K562 (cell line): ENCODE measurements at regions of chr2 and their contacts with region 1.

Region 1: DNA sequence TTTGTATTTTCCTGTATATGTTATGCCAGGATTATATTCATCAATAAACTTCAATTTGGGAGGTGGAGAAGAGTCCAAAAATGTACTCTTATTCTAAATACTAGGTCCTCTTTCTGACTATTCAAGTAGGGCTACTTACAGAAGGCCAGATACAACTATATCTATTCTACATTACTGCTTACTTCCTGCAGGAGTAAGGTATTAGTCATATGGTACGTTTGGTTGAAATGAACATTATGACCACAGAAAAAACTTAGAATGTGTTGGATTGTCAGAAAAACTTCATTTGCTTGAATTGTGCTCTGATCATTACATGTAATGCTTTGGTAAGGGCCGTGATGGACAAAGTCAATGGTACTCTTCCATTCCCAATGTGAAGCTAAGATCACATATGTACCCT is 35.0 kb downstream of the STAT4 start:
- DNase-seq: no peak
- ATAC-seq: no peak
- H3K4me3 ChIP-seq: no peak overlapping the region
- H3K27ac ChIP-seq: no peak overlapping the region
- H3K4me1 ChIP-seq: no peaks in the 10 kb centered on the region
- H3K27me3 ChIP-seq: 0 out of 5 replicates have a peak, but pooled peaks cover 0 to 4% of the 10 kb centered on the region in 2 experiments
- CTCF ChIP-seq: no peak
- EP300 ChIP-seq: no peak
- POLR2A ChIP-seq: no peak
- RAD21 ChIP-seq: no peak

Region 2: GRCh38 chr2:191145769-191146471 is 30.1 kb after region 1 on chr2:
- CTCF ChIA-PET with region 1: no interaction called
- POLR2A ChIA-PET with region 1: no interaction called
- in situ Hi-C with region 1: no loop called
- intact Hi-C with region 1: loop called (anchors 1 kb)
- DNase-seq: no peak
- ATAC-seq: no peak
- H3K4me3 ChIP-seq: no peak overlapping the region
- H3K27ac ChIP-seq: no peak overlapping the region
- H3K4me1 ChIP-seq: peaks cover 0 to 6% of the 10 kb centered on the region in 2 experiments; a peak in 2 of 5 replicates
- H3K27me3 ChIP-seq: peaks cover 0 to 4% of the 10 kb centered on the region in 2 experiments; a peak in 3 of 5 replicates
- CTCF ChIP-seq: no peak
- EP300 ChIP-seq: no peak
- POLR2A ChIP-seq: no peak
- RAD21 ChIP-seq: no peak

Region 3: GRCh38 chr2:191539068-191539467 is 423.3 kb after region 1 on chr2:
- CTCF ChIA-PET with region 1: no interaction called
- POLR2A ChIA-PET with region 1: no interaction called
- in situ Hi-C with region 1: no loop called
- intact Hi-C with region 1: no loop called
- DNase-seq: peak; percentile 10 to 43 (median 26)
- ATAC-seq: peak; percentile 48; the same call in 1 of the 3 replicates
- H3K4me3 ChIP-seq: no peak overlapping the region
- H3K27ac ChIP-seq: no peak overlapping the region
- H3K4me1 ChIP-seq: no peaks in the 10 kb centered on the region; a peak in 1 of 5 replicates
- H3K27me3 ChIP-seq: no peaks in the 10 kb centered on the region; a peak in 1 of 5 replicates
- CTCF ChIP-seq: peak; percentile 34 to 60 (median 39); a peak in 4 of 6 replicates
- EP300 ChIP-seq: no peak
- POLR2A ChIP-seq: no peak
- RAD21 ChIP-seq: peak in 1 of 2 experiments; percentile 47; a peak in 3 of 4 replicates